ENCODE measurements at regions of chr2 and their contacts with region 1.

Region 1: GRCh38 chr2:154439156-154439555 is 259.3 kb upstream of the KCNJ3 start:
- DNase-seq: no peak
- ATAC-seq: no peak
- H3K4me3 ChIP-seq: no peak overlapping the region
- H3K27ac ChIP-seq: no peak overlapping the region
- H3K4me1 ChIP-seq: no peaks in the 10 kb centered on the region
- H3K27me3 ChIP-seq: no peaks in the 10 kb centered on the region

Region 2: DNA sequence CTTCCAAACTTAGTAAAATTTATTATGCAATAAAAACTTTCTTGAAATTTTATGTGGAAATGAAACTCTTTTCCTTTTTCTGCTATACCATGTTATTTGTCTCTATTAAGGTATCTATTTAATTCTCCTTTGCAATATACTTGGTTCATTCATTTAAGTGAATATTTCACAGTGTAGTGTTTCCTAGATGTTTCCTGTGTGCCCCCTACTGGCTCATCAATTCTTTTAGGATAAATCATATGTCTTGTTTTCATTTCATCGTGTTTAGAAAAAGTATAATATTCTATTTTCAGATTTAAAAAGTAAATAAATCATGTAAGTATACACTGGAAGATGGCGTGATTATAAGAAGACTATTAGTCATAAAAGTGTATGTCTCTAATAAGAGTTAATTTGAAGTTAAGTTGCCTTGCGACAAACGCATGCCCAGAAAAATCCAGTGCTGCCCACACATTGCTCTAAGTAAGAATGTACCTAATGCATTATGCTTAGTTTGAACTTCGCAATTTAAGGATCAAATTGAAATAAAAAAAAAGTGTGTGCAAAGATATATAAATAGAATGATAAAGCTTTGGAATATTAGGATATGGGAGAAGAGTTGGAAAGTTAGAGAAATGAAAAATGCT is 784.7 kb after region 1 on chr2:
- intact Hi-C with region 1: loop called in 2 of 4 experiments (anchors 10 kb)
- DNase-seq: no peak
- ATAC-seq: no peak
- H3K4me3 ChIP-seq: no peak overlapping the region
- H3K27ac ChIP-seq: no peak overlapping the region
- H3K4me1 ChIP-seq: no peaks in the 10 kb centered on the region
- H3K27me3 ChIP-seq: no peaks in the 10 kb centered on the region

Measured in right cardiac atrium (tissue), 5 donors.